Psoas muscle (tissue), 8 donors: ENCODE measurements at regions of chr5 and their contacts with region 1.

Region 1: DNA sequence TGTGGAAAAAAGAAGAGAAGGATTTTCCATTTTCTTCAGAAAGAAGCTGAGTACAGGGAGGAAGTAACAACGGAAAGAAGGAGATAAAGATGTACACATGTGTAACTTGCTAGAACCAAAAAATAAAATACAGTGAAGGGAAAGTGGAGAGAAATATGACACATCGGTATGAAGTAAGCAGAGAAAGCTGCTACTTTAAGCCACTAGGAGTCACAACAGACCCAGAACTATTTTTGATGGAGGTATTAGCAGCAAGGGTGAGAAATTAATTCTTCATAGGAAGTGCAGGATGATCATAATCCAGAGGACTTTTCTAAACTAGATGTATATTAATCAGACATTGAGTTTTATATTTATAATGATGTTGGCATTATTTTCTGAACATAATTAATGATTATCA is 88.5 kb downstream of the FAM174A start:
- DNase-seq: no peak
- ATAC-seq: no peak
- H3K4me3 ChIP-seq: no peak overlapping the region
- H3K27ac ChIP-seq: no peak overlapping the region
- H3K4me1 ChIP-seq: no peaks in the 10 kb centered on the region
- H3K27me3 ChIP-seq: no peaks in the 10 kb centered on the region
- CTCF ChIP-seq: peak; percentile 45

Region 2: GRCh38 chr5:101036778-101037177 is 413.1 kb after region 1 on chr5:
- intact Hi-C with region 1: loop called in 1 of 2 experiments (anchors 10 kb)
- DNase-seq: no peak
- ATAC-seq: no peak
- H3K4me3 ChIP-seq: no peak overlapping the region
- H3K27ac ChIP-seq: no peak overlapping the region
- H3K4me1 ChIP-seq: no peaks in the 10 kb centered on the region
- H3K27me3 ChIP-seq: no peaks in the 10 kb centered on the region
- CTCF ChIP-seq: no peak